Endothelial cell of umbilical vein (primary cell): ENCODE measurements at regions of chr11 and their contacts with region 1.

Region 1: GRCh38 chr11:44556735-44557409 is 8.6 kb upstream of the CD82 start:
- DNase-seq: peak; percentile 61
- H3K4me3 ChIP-seq: no peak overlapping the region
- H3K27ac ChIP-seq: no peak overlapping the region
- H3K4me1 ChIP-seq: no peaks in the 10 kb centered on the region
- H3K27me3 ChIP-seq: peaks cover 2 to 4% of the 10 kb centered on the region in 2 experiments
- CTCF ChIP-seq: peak; percentile 51 to 76
- POLR2A ChIP-seq: no peak

Region 2: GRCh38 chr11:44530413-44531115 is 26.3 kb before region 1 on chr11:
- CTCF ChIA-PET with region 1: no interaction called
- POLR2A ChIA-PET with region 1: no interaction called
- dilution Hi-C with region 1: no loop called
- intact Hi-C with region 1: no loop called
- DNase-seq: no peak
- H3K4me3 ChIP-seq: no peak overlapping the region
- H3K27ac ChIP-seq: no peak overlapping the region
- H3K4me1 ChIP-seq: no peaks in the 10 kb centered on the region
- H3K27me3 ChIP-seq: peaks cover 0 to 2% of the 10 kb centered on the region in 2 experiments
- CTCF ChIP-seq: no peak
- POLR2A ChIP-seq: no peak

Region 3: DNA sequence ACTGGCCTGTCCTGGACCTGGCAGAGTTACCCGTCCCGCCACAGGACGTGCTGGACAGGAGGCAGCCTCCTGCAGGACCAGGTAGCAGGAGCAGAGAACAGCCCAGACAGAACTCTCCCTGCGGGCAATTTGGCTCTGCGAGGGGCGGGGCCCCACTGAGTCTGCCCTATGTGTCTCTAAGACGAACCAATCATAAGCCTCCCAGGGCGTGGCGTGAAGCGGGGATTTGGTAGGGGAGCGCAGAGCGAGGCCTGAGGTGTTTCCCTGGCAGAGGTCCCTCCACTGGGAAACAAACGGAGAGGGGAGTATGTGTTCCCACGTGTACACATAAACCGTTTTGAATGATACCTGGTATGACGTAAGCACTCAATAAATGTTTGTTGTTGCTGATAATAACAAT is 16.0 kb after region 1 on chr11:
- CTCF ChIA-PET with region 1: interaction called, 10 read pairs
- POLR2A ChIA-PET with region 1: no interaction called
- dilution Hi-C with region 1: no loop called
- intact Hi-C with region 1: no loop called
- DNase-seq: no peak
- H3K4me3 ChIP-seq: no peak overlapping the region
- H3K27ac ChIP-seq: no peak overlapping the region
- H3K4me1 ChIP-seq: peaks cover 33% of the 10 kb centered on the region
- H3K27me3 ChIP-seq: no peaks in the 10 kb centered on the region
- CTCF ChIP-seq: no peak
- POLR2A ChIP-seq: no peak

Region 4: GRCh38 chr11:44582636-44583035 is 25.8 kb after region 1 on chr11:
- CTCF ChIA-PET with region 1: interaction called, 10 read pairs
- POLR2A ChIA-PET with region 1: no interaction called
- dilution Hi-C with region 1: no loop called
- intact Hi-C with region 1: no loop called
- DNase-seq: no peak
- H3K4me3 ChIP-seq: no peak overlapping the region
- H3K27ac ChIP-seq: no peak overlapping the region
- H3K4me1 ChIP-seq: no peaks in the 10 kb centered on the region
- H3K27me3 ChIP-seq: no peaks in the 10 kb centered on the region
- CTCF ChIP-seq: no peak
- POLR2A ChIP-seq: no peak

Region 5: GRCh38 chr11:44600839-44601383 is 44.0 kb after region 1 on chr11:
- CTCF ChIA-PET with region 1: interaction called, 14 read pairs
- POLR2A ChIA-PET with region 1: no interaction called
- dilution Hi-C with region 1: no loop called
- intact Hi-C with region 1: no loop called
- DNase-seq: no peak
- H3K4me3 ChIP-seq: no peak overlapping the region
- H3K27ac ChIP-seq: no peak overlapping the region
- H3K4me1 ChIP-seq: no peaks in the 10 kb centered on the region
- H3K27me3 ChIP-seq: no peaks in the 10 kb centered on the region
- CTCF ChIP-seq: no peak
- POLR2A ChIP-seq: no peak

Region 6: GRCh38 chr11:44611687-44612434 is 55.0 kb after region 1 on chr11:
- CTCF ChIA-PET with region 1: interaction called, 860 read pairs
- POLR2A ChIA-PET with region 1: interaction called, 3 read pairs
- dilution Hi-C with region 1: no loop called
- intact Hi-C with region 1: loop called (anchors 1 kb)
- DNase-seq: no peak
- H3K4me3 ChIP-seq: no peak overlapping the region
- H3K27ac ChIP-seq: no peak overlapping the region
- H3K4me1 ChIP-seq: peaks cover 9% of the 10 kb centered on the region
- H3K27me3 ChIP-seq: no peaks in the 10 kb centered on the region
- CTCF ChIP-seq: no peak
- POLR2A ChIP-seq: no peak

Region 7: DNA sequence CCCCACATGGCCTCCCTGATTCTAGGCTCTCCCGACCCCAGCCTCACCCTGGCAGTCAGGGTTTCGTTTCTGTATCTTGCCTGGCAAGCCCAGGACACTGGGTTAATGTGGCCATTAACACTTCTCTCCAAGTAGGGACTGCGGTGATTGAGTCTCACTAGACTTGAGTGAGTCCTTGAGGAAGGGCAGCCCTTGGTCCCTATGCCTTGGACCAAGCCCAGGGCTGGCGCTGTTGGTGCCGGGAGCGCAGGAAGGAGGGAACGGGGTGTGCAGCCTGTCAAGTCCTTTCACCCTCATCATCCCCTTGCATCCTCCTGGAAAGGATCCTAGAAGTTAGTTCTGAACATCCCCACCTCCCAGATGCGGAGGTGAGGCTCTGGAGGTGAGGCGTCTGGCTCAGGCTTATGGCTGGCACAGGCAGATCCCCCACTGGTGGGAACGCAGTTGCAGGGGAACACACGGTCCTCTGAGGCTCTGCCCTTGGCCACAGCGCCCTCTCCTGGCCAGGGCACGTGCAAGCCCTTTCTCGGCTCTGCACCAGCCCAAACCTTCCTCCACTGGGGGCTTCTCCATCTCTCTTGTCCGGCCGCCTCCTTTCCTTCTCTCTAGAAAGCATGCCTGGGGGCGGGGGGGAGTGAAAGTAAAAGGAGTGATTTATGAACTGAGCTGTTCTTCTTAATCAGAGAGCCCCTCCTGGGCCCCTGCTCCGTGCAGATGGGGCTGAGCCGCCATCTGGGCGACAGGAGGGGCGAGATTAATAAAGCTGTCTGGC is 337.2 kb after region 1 on chr11:
- CTCF ChIA-PET with region 1: interaction called, 5 read pairs
- POLR2A ChIA-PET with region 1: no interaction called
- dilution Hi-C with region 1: no loop called
- intact Hi-C with region 1: loop called (anchors 5 kb)
- DNase-seq: peak; percentile 69
- H3K4me3 ChIP-seq: no peak overlapping the region
- H3K27ac ChIP-seq: no peak overlapping the region
- H3K4me1 ChIP-seq: no peaks in the 10 kb centered on the region
- H3K27me3 ChIP-seq: no peaks in the 10 kb centered on the region
- CTCF ChIP-seq: peak; percentile 83 to 95
- POLR2A ChIP-seq: no peak